ENCODE measurements at regions of chr14 and their contacts with region 1.

Region 1: DNA sequence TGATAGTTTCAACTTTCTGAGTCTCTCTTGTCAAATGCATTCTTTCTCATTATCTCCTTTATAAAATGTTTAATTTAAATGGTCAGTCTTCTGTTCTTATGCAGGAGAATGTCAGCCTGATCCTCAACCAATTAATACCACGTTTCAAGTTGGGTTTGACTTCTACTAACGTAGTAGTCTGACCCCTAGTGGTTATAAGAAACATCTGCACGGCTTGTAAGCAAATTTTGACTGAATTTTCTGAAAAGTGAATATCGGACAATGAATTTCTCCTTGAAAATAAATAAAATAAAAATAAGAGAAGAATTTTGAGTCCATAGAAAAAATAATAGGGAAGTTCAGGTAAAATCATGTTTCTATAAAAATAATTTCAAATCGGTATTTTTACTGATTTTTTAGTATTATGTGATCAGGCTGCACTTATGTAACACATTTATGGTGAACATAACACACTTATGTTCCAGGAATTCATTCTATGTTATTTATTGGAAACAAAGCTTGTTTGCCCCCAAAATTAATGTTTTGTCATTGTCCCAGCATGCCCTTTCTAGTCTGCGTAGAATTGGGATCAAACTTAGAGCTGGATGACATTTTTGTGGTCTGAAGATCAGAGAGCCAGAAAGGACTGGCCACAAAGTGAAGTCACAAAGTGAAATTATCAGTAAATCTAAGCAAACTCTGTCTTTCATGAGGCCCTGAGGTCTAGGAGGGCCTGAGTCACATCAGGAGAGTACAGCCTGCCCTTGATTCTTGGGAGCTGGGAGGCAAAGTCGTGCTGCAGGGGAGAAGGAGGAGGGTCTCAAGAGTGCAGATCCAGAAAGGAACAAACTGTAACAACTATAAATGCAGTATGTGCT is 101.2 kb upstream of the STXBP6 start:
- DNase-seq: no peak
- H3K4me3 ChIP-seq: no peak overlapping the region
- H3K27ac ChIP-seq: no peak overlapping the region
- H3K4me1 ChIP-seq: no peaks in the 10 kb centered on the region
- H3K27me3 ChIP-seq: no peaks in the 10 kb centered on the region
- CTCF ChIP-seq: peak; percentile 55 to 71

Region 2: DNA sequence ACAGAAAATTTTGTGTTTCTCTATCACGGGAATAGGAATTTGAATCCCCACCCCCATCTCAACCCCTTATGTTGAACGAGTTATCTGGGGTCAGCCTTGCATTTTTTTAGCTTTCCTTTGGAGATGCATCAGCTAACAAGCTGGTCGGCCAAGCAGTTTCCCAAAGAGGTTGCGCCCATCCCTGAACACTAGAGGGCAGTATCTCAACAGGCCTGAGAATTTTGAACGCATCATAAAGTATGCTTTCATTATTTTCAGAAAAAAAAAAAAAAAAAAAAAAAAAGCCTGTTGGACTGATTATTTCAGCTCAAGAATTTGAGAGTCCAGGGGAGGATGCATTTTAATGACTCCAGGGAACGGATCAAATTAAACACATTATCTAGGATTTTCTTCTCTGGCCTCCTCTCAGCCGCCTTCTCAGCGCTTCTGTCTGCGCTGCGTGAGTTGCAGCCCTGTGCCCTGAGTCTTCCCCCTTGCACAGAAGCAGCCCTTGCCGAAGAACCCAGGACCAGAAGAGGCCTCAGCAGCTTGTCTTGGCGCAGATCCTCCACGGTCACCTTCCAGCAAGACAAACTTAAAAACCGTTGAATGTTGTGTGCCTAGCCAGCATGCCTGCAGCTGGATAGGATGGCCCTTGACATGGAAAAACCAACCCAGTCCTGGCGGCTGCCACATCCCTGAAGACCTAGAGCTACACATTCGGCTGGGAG is 440.6 kb before region 1 on chr14:
- intact Hi-C with region 1: loop called (anchors 10 kb)
- DNase-seq: peak in 1 of 2 donors; percentile 39
- H3K4me3 ChIP-seq: no peak overlapping the region
- H3K27ac ChIP-seq: no peak overlapping the region
- H3K4me1 ChIP-seq: no peaks in the 10 kb centered on the region
- H3K27me3 ChIP-seq: no peaks in the 10 kb centered on the region
- CTCF ChIP-seq: peak; percentile 50 to 57

Region 3: GRCh38 chr14:24734878-24735500 is 416.2 kb before region 1 on chr14:
- intact Hi-C with region 1: no loop called
- DNase-seq: peak in 1 of 2 donors; percentile 37
- H3K4me3 ChIP-seq: no peak overlapping the region
- H3K27ac ChIP-seq: no peak overlapping the region
- H3K4me1 ChIP-seq: no peaks in the 10 kb centered on the region
- H3K27me3 ChIP-seq: no peaks in the 10 kb centered on the region
- CTCF ChIP-seq: peak; percentile 43 to 46

Measured in tibial artery (tissue), 4 donors.